Esophagus muscularis mucosa (tissue), 4 donors: ENCODE measurements at regions of chr20 and their contacts with region 1.

Region 1: GRCh38 chr20:63381807-63382322 is 20.7 kb upstream of the CHRNA4 start:
- DNase-seq: no peak
- H3K4me3 ChIP-seq: no peak overlapping the region
- H3K27ac ChIP-seq: no peak overlapping the region
- H3K4me1 ChIP-seq: peaks cover 0 to 14% (median 0%) of the 10 kb centered on the region in 4 donors
- H3K27me3 ChIP-seq: peaks cover 0 to 84% (median 2%) of the 10 kb centered on the region in 4 donors
- CTCF ChIP-seq: peak; percentile 67 to 92 (median 71)
- EP300 ChIP-seq: no peak
- POLR2A ChIP-seq: no peak

Region 2: GRCh38 chr20:63309261-63310071 is 72.4 kb before region 1 on chr20:
- intact Hi-C with region 1: loop called (anchors 5 kb)
- DNase-seq: no peak
- H3K4me3 ChIP-seq: no peak overlapping the region
- H3K27ac ChIP-seq: no peak overlapping the region
- H3K4me1 ChIP-seq: peaks cover 0 to 20% (median 14%) of the 10 kb centered on the region in 4 donors
- H3K27me3 ChIP-seq: peaks cover 0 to 84% (median 28%) of the 10 kb centered on the region in 4 donors
- CTCF ChIP-seq: peak; percentile 55 to 89 (median 67)
- EP300 ChIP-seq: no peak
- POLR2A ChIP-seq: no peak